AG04450 (cell line): ENCODE measurements at regions of chr9 and their contacts with region 1.

Region 1: DNA sequence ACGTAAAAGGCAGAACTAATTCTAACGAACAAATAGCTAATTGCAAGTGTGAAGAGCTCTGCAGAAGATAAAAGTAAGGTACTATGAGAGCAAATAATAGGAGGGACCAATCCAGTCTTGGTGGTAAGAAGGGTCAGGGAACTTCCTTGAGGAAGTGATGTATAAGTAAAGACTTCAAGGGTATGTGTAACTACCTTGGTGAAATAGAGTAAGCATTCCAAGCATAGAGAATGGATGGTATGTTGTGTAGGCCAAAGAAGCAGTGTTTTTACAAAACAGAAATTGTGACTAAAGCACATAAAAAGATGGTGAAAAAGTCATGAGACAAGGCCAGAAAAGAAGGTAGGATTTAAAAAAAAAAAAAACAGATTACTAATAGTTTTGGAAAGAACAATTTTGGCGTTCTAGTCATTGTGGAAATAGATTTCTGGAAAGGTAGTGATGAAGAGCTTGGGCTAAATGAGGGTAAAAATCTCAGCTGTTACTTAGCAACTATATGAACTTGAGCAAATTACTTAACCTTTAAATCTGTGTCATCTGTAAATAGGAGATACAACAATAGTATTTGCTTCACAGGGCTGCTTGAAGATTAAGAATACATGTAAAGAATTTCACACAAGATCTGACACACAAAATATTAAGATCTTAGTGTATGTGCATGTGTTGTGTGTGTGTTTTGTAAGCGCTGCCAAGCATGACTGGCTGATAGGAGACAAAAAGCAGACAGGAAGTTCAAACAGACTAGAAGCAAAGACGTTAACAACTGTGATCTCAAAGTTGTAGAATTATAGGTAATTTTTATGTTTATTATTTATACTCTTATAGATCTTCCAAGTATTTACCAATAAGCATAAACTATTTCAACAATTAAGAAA is 73.5 kb downstream of the NR6A1 start:
- DNase-seq: no peak
- H3K4me3 ChIP-seq: no peak overlapping the region
- H3K27ac ChIP-seq: peak overlapping the region; percentile 54
- H3K27me3 ChIP-seq: no peaks in the 10 kb centered on the region
- CTCF ChIP-seq: no peak

Region 2: GRCh38 chr9:124658165-124659017 is 39.2 kb before region 1 on chr9:
- CTCF ChIA-PET with region 1: no interaction called
- POLR2A ChIA-PET with region 1: interaction called, 11 read pairs
- DNase-seq: peak; percentile 93
- H3K4me3 ChIP-seq: peak overlapping the region; percentile 71
- H3K27ac ChIP-seq: peak overlapping the region; percentile 93
- H3K27me3 ChIP-seq: no peaks in the 10 kb centered on the region
- CTCF ChIP-seq: no peak

Region 3: DNA sequence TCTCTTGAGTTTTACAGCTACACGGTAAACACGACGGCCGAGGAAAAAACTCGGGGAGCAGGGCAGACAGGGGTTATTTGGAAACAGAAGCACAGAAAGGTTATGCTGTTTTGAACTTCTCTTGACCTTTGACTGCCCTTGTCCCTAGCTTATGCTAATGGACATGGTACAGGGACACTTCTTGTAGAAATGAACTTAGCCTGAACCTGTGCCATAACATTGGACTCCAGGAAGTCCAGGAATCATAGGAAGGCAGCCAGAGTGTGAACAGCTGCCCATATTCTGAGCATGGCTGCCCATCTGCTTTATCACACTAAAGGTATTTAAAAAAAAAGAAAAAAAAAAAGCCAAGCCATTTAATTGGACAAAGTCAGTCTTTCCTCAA is 27.5 kb after region 1 on chr9:
- CTCF ChIA-PET with region 1: no interaction called
- POLR2A ChIA-PET with region 1: no interaction called
- DNase-seq: no peak
- H3K4me3 ChIP-seq: no peak overlapping the region
- H3K27ac ChIP-seq: no peak overlapping the region
- H3K27me3 ChIP-seq: no peaks in the 10 kb centered on the region
- CTCF ChIP-seq: no peak